GM10248 (cell line): ENCODE measurements at regions of chr13 and their contacts with region 1.

Region 1: GRCh38 chr13:38872693-38873092 is 117.9 kb downstream of the STOML3 start:
- DNase-seq: peak; percentile 31
- CTCF ChIP-seq: peak; percentile 69

Region 2: GRCh38 chr13:38686577-38687245 is 186.0 kb before region 1 on chr13 and contains the start of gene FREM2:
- CTCF ChIA-PET with region 1: interaction called, 12 read pairs
- POLR2A ChIA-PET with region 1: no interaction called
- DNase-seq: no peak
- CTCF ChIP-seq: no peak

Region 3: GRCh38 chr13:38888309-38888708 is 15.6 kb after region 1 on chr13:
- CTCF ChIA-PET with region 1: interaction called, 35 read pairs
- POLR2A ChIA-PET with region 1: no interaction called
- DNase-seq: no peak
- CTCF ChIP-seq: no peak